Naive thymus-derived CD4-positive, alpha-beta T cell (primary cell): ENCODE measurements at regions of chr17 and their contacts with region 1.

Region 1: GRCh38 chr17:38868817-38869525 is 887 bp upstream of the LASP1 start:
- DNase-seq: peak; percentile 82 to 93 (median 90)
- ATAC-seq: peak; percentile 67
- H3K4me3 ChIP-seq: peak overlapping the region; percentile 98
- H3K4me3 Mint-ChIP-seq: peak overlapping the region; percentile 94 to 100 (median 99)
- H3K27ac ChIP-seq: peak overlapping the region; percentile 88
- H3K27ac Mint-ChIP-seq: peak overlapping the region; percentile 90 to 98 (median 97)
- H3K4me1 ChIP-seq: peaks cover 35 to 38% of the 10 kb centered on the region in 2 donors
- H3K4me1 Mint-ChIP-seq: peaks cover 33 to 49% (median 48%) of the 10 kb centered on the region in 7 donors
- H3K27me3 ChIP-seq: no peaks in the 10 kb centered on the region
- H3K27me3 Mint-ChIP-seq: peaks cover 0 to 6% (median 0%) of the 10 kb centered on the region in 5 donors

Region 2: DNA sequence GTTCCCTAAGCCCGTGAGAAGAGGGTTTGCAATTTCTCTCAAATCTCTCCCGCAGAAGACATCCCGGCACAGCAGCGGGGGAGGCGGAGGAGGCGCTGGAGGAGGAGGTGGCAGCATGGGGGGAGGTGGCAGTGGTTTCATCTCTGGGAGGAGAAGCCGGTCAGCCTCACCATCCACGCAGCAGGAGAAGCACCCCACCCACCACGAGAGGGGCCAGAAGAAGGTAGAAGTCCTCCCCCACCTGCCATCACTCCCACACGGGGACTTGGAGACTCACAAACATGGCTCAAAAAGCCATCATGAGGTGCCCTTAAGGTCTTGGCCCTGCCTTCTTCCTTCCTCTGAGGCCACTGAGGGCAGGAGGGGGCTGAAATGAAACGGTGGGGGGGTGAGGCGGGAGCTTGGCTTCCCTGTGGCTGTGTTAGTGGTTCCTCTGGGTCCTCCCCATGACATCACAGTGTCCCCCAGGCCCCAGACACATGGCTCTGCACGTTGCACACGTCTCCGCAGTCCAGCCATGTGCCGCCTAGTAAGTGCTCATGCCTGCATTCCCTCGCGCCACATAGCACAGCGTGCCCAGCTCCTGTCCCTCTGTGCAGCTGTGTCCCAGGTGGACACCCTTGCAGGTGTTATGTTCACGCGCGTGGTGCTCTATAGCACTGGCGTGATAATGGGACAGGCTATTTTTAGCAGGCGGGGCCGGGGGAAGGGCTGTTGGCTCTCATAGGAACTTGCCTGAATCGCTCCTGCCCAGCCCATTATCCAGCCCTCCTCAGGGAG is 157.0 kb before region 1 on chr17:
- CTCF ChIA-PET with region 1: no interaction called
- POLR2A ChIA-PET with region 1: no interaction called
- intact Hi-C with region 1: no loop called
- DNase-seq: no peak
- ATAC-seq: no peak
- H3K4me3 ChIP-seq: no peak overlapping the region
- H3K4me3 Mint-ChIP-seq: no peak overlapping the region
- H3K27ac ChIP-seq: no peak overlapping the region
- H3K27ac Mint-ChIP-seq: peak overlapping the region in 4 of 9 donors; percentile 28 to 69 (median 46)
- H3K4me1 ChIP-seq: peaks cover 13 to 16% of the 10 kb centered on the region in 2 donors
- H3K4me1 Mint-ChIP-seq: peaks cover 42 to 62% (median 53%) of the 10 kb centered on the region in 7 donors
- H3K27me3 ChIP-seq: no peaks in the 10 kb centered on the region
- H3K27me3 Mint-ChIP-seq: no peaks in the 10 kb centered on the region

Region 3: DNA sequence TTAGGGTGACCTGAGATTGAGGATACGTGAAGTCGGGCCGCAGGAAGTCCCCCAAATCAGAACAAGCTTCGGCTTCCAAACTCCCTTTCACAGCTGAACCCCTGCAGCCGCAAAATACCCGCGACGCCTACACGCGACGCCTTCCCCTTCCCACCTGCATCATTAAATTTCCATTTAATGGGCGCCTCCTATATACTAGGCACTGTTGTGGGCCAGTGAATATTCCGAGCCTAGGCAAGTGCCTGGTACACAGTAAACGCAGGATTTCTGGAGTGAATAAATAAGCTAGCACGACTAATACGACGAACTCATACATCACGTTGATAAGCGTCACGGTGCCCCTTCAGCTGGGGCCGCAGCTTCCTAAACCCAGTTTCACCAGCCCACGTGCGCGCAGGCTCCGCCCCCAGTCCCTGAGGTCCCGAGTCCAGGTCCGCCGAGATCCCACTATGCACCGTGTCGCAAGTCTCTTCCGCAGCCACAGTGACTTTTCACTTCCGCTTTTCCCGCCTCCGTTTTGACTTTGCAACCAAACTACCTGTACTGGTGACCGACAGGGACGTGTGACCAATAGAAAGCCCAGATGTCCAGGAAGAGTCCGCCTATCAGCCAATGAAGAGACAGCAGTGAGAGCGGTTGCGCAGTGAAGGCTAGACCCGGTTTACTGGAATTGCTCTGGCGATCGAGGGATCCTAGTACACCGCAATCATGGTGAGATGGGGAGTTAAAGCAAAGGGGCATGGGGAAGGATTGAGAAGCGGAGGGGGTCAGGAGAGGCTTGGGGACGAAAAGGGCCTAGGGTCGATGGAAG is 116.6 kb before region 1 on chr17 and contains the start of gene PSMB3:
- CTCF ChIA-PET with region 1: interaction called, 6 read pairs
- POLR2A ChIA-PET with region 1: interaction called, 14 read pairs
- intact Hi-C with region 1: loop called (anchors 1 kb)
- DNase-seq: peak; percentile 76 to 98 (median 96)
- ATAC-seq: peak; percentile 90
- H3K4me3 ChIP-seq: peak within 1 kb of the TSS; percentile 95
- H3K4me3 Mint-ChIP-seq: peak within 1 kb of the TSS; percentile 89 to 100 (median 98)
- H3K27ac ChIP-seq: peak within 1 kb of the TSS; percentile 83
- H3K27ac Mint-ChIP-seq: peak within 1 kb of the TSS; percentile 91 to 99 (median 97)
- H3K4me1 ChIP-seq: peaks cover 31 to 48% of the 10 kb centered on the region in 2 donors
- H3K4me1 Mint-ChIP-seq: peaks cover 37 to 56% (median 44%) of the 10 kb centered on the region in 7 donors
- H3K27me3 ChIP-seq: peaks cover 6 to 9% of the 10 kb centered on the region in 2 donors
- H3K27me3 Mint-ChIP-seq: peaks cover 12 to 32% (median 20%) of the 10 kb centered on the region in 5 donors
- total RNA-seq, gene PSMB3: 60.8 to 287 (median 92.1) TPM

Region 4: GRCh38 chr17:38853292-38854219 is 15.4 kb before region 1 on chr17 and contains the start of gene RPL23:
- CTCF ChIA-PET with region 1: interaction called, 21 read pairs
- POLR2A ChIA-PET with region 1: interaction called, 171 read pairs
- intact Hi-C with region 1: loop called (anchors 1 kb)
- DNase-seq: peak; percentile 67 to 94 (median 91)
- ATAC-seq: peak; percentile 91
- H3K4me3 ChIP-seq: peak within 1 kb of the TSS; percentile 70
- H3K4me3 Mint-ChIP-seq: peak within 1 kb of the TSS; percentile 82 to 98 (median 96)
- H3K27ac ChIP-seq: peak within 1 kb of the TSS; percentile 89
- H3K27ac Mint-ChIP-seq: peak within 1 kb of the TSS; percentile 96 to 100 (median 99)
- H3K4me1 ChIP-seq: peaks cover 16 to 25% of the 10 kb centered on the region in 2 donors
- H3K4me1 Mint-ChIP-seq: peaks cover 34 to 53% (median 45%) of the 10 kb centered on the region in 7 donors
- H3K27me3 ChIP-seq: no peaks in the 10 kb centered on the region
- H3K27me3 Mint-ChIP-seq: no peaks in the 10 kb centered on the region
- total RNA-seq, gene RPL23: 1,312 to 2,438 (median 1,877) TPM

Region 5: DNA sequence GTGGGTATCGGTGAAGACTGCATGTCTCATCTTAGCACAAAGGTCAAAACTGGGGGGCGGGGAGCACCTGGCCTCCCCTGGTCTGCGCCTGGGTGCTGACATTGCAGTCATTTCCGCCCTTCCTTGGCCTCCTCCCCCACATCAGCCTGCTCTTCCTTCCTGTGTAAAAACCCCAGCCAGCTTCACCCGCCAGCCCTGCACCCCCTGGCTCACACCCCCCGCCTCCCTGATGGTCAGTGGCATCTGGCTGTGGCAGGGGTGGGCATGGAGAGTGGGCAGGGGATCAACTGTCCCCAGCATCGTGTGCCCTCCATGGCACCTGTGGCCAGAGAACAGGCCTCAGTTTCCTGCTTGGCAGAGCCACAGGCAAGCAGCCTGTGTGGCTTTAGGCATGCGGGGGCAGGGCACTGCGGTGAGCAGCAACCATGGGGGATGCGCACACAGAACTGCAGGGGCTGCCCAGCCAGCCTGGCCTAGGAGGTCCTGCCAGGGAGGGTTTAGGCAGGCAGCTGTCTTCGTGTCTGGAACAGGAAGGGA is 29.9 kb after region 1 on chr17:
- CTCF ChIA-PET with region 1: interaction called, 5 read pairs
- POLR2A ChIA-PET with region 1: interaction called, 57 read pairs
- intact Hi-C with region 1: loop called (anchors 1 kb)
- DNase-seq: peak; percentile 48 to 84 (median 73)
- ATAC-seq: peak; percentile 89
- H3K4me3 ChIP-seq: peak overlapping the region; percentile 46
- H3K4me3 Mint-ChIP-seq: peak overlapping the region; percentile 77 to 93 (median 83)
- H3K27ac ChIP-seq: peak overlapping the region; percentile 81
- H3K27ac Mint-ChIP-seq: peak overlapping the region; percentile 86 to 100 (median 98)
- H3K4me1 ChIP-seq: peaks cover 60 to 85% of the 10 kb centered on the region in 2 donors
- H3K4me1 Mint-ChIP-seq: peaks cover 30 to 71% (median 65%) of the 10 kb centered on the region in 7 donors
- H3K27me3 ChIP-seq: no peaks in the 10 kb centered on the region
- H3K27me3 Mint-ChIP-seq: no peaks in the 10 kb centered on the region

Region 6: GRCh38 chr17:38982858-38983746 is 114.1 kb after region 1 on chr17:
- CTCF ChIA-PET with region 1: interaction called, 9 read pairs
- POLR2A ChIA-PET with region 1: no interaction called
- intact Hi-C with region 1: loop called in 1 of 2 experiments (anchors 2 kb)
- DNase-seq: peak in 7 of 9 donors; percentile 40 to 76 (median 62)
- ATAC-seq: peak; percentile 70
- H3K4me3 ChIP-seq: no peak overlapping the region
- H3K4me3 Mint-ChIP-seq: no peak overlapping the region
- H3K27ac ChIP-seq: no peak overlapping the region
- H3K27ac Mint-ChIP-seq: peak overlapping the region in 1 of 9 donors; percentile 32
- H3K4me1 ChIP-seq: peaks cover 0 to 6% of the 10 kb centered on the region in 2 donors
- H3K4me1 Mint-ChIP-seq: peaks cover 0 to 6% (median 5%) of the 10 kb centered on the region in 7 donors
- H3K27me3 ChIP-seq: no peaks in the 10 kb centered on the region
- H3K27me3 Mint-ChIP-seq: peaks cover 0 to 12% (median 0%) of the 10 kb centered on the region in 5 donors

Region 7: DNA sequence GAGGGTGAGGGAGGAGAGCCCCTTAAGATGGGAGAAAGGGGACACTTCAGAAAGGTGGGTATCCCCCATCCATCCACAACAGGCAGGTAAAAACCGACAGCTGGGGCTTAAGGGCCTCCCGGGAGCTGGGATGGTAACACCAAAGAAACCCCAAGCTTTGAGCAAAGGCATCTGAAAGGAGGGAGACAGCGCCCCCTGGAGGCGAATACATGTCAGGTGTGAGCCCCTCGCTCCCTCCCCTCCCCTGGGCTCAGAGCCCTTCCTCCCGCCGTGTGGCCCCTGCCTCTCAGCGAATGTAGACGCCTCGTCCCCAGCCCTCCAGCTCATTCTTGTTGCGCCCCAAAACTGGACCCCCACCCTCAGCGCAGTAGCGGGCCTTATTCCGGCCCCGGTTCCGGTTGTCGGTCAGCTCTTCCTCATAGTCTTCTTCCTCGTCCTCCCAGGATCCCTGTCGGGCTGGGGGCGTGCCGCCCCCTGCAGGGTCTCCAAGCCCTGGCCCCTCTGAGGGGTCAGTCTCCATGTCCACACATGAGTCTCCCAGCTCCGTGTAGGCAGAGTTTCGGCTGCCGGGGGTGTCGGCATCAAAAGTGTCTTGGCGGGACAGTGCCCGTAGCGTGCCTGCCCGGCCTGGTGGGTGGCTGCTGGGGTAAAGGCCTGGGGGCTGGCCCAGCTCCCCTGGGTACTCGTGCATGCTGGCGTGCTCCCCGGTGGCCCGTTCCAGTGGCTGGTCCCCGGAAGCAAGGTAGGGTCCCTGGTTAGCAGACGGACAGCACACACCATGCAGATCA is 306.1 kb after region 1 on chr17:
- CTCF ChIA-PET with region 1: no interaction called
- POLR2A ChIA-PET with region 1: no interaction called
- intact Hi-C with region 1: loop called in 1 of 2 experiments (anchors 1 kb)
- DNase-seq: peak; percentile 64 to 80 (median 74)
- ATAC-seq: peak; percentile 93
- H3K4me3 ChIP-seq: no peak overlapping the region
- H3K4me3 Mint-ChIP-seq: no peak overlapping the region
- H3K27ac ChIP-seq: no peak overlapping the region
- H3K27ac Mint-ChIP-seq: peak overlapping the region in 3 of 9 donors; percentile 24 to 78 (median 48)
- H3K4me1 ChIP-seq: peaks cover 0 to 8% of the 10 kb centered on the region in 2 donors
- H3K4me1 Mint-ChIP-seq: peaks cover 12 to 29% (median 20%) of the 10 kb centered on the region in 7 donors
- H3K27me3 ChIP-seq: no peaks in the 10 kb centered on the region
- H3K27me3 Mint-ChIP-seq: no peaks in the 10 kb centered on the region